ENCODE measurements at regions of chr12 and their contacts with region 1.

Region 1: DNA sequence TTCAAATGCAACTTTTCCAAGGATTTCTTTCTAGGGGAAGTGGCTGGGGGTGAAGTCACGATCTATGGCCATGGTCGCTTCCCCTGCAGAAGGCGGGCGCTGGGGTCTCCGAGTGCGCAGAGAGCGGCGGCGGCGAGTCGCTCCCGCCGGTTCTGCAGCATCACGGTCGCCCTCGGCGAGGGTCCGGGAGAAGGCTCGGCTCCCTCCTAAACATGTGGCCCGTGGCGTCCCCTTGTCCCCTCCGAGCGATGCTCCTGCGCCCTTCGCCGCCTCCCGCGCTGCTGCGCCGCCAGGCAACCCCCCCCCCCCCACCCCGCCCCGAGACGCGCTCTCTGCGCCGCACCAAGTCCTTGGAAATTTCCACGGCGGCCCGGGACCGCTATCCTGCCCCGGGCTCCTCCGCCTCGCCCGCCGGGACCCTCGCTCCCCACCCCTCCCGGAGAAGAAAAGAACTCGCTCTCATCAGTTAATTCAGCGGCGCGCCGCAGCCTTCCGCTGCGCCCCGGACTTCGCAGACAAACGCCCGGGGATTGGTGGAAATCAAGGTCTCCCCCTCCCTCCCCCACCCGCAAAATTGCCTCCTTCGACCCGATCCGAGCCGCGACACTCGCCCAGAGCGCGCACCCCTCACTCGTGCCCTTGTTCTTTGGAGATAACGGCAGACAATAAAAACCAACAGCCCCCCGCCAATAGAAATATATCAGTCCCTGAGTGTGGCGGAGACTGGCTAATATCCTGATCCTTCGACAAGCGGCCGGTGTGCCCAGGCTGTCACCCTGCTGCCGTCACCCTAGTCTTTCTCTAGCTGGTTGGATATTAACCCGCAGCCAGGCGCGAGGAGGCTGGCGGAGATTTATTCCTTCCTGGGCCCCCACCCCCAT is at the start of gene ST8SIA1:
- DNase-seq: no peak
- H3K4me3 ChIP-seq: peak within 1 kb of the TSS; percentile 30 to 47 (median 39)
- H3K27ac ChIP-seq: no peak within 1 kb of the TSS
- H3K4me1 ChIP-seq: no peaks in the 10 kb centered on the region
- H3K27me3 ChIP-seq: peaks cover 31 to 65% of the 10 kb centered on the region in 2 experiments
- CTCF ChIP-seq: no peak
- POLR2A ChIP-seq: no peak
- total RNA-seq, gene ST8SIA1: not detected in 2 replicates

Region 2: GRCh38 chr12:22083167-22083566 is 251.5 kb before region 1 on chr12:
- CTCF ChIA-PET with region 1: interaction called, 22 read pairs
- POLR2A ChIA-PET with region 1: no interaction called
- dilution Hi-C with region 1: no loop called
- intact Hi-C with region 1: loop called (anchors 1 kb)
- DNase-seq: peak; percentile 56
- H3K4me3 ChIP-seq: no peak overlapping the region
- H3K27ac ChIP-seq: no peak overlapping the region
- H3K4me1 ChIP-seq: no peaks in the 10 kb centered on the region
- H3K27me3 ChIP-seq: peaks cover 0 to 2% of the 10 kb centered on the region in 2 experiments
- CTCF ChIP-seq: peak in 1 of 2 donors; percentile 12
- POLR2A ChIP-seq: no peak

Region 3: GRCh38 chr12:22121227-22121626 is 213.4 kb before region 1 on chr12:
- CTCF ChIA-PET with region 1: interaction called, 16 read pairs
- POLR2A ChIA-PET with region 1: no interaction called
- dilution Hi-C with region 1: no loop called
- intact Hi-C with region 1: loop called (anchors 5 kb)
- DNase-seq: no peak
- H3K4me3 ChIP-seq: no peak overlapping the region
- H3K27ac ChIP-seq: no peak overlapping the region
- H3K4me1 ChIP-seq: no peaks in the 10 kb centered on the region
- H3K27me3 ChIP-seq: peaks cover 0 to 2% of the 10 kb centered on the region in 2 experiments
- CTCF ChIP-seq: peak; percentile 4 to 32
- POLR2A ChIP-seq: no peak

Region 4: DNA sequence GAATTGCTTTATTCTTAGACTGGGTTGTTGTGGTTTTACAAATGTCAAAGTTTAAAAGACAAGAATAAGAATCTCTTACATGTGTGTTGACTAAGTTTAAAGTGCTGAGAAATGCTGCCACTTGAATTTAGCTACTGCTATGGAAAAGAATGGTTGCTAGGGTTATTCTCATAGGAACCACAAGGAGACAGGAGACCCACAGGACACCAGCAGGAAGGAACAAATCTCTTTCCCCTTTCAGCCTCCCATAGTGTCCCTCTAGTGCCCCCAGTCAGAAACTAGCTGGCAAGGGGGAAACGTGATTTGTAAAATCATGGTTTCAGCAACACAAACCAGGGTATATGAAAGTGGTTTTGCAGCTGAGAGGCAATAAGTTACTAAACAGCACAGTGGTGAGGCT is 102.8 kb before region 1 on chr12:
- CTCF ChIA-PET with region 1: interaction called, 20 read pairs
- POLR2A ChIA-PET with region 1: no interaction called
- dilution Hi-C with region 1: no loop called
- intact Hi-C with region 1: no loop called
- DNase-seq: peak; percentile 4
- H3K4me3 ChIP-seq: no peak overlapping the region
- H3K27ac ChIP-seq: no peak overlapping the region
- H3K4me1 ChIP-seq: no peaks in the 10 kb centered on the region
- H3K27me3 ChIP-seq: peaks cover 3% of the 10 kb centered on the region in 2 experiments
- CTCF ChIP-seq: peak in 1 of 2 donors; percentile 3
- POLR2A ChIP-seq: no peak

Region 5: GRCh38 chr12:22255097-22255496 is 79.6 kb before region 1 on chr12:
- CTCF ChIA-PET with region 1: no interaction called
- POLR2A ChIA-PET with region 1: no interaction called
- dilution Hi-C with region 1: no loop called
- intact Hi-C with region 1: no loop called
- DNase-seq: no peak
- H3K4me3 ChIP-seq: no peak overlapping the region
- H3K27ac ChIP-seq: no peak overlapping the region
- H3K4me1 ChIP-seq: no peaks in the 10 kb centered on the region
- H3K27me3 ChIP-seq: peaks cover 12 to 20% of the 10 kb centered on the region in 2 experiments
- CTCF ChIP-seq: no peak
- POLR2A ChIP-seq: no peak

Region 6: DNA sequence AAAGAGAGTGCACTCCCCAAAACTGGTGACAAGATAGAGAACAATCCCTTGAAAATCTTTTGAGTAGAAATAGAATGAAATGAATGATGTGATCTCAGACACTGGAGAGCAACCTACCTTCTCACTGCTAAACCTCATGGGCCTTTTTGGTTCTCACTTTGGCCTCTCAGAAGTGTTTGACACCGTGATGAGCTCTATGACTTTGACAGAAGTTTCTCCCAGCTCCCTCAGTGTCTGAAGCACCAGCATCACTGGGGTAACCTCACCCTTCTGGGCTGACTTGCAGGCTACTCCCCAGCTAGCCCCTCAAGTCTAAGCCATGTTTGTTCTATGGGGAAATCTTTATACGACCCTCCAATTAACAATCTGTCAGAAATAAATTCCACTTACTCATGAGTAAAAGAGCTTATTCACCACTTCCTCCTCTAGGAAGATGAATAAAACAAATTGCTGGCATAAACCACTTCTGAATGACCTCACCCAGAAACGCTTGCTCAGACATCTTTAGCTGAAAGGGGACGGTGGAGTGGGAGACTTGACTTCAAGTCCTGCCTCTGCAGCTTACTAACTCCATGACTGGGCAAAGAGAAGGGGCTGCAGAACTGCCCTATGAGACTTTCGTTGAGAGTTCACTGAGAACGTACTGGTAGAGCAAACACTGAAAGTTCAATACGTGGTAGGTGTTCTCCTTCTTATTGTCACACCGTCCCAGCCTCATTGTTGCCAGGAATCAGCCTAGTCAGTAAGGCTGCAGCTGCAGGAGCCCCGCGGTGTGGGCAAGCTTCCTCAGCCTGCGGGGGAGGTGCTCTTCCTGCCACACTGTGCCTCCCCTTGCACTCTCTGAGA is 46.7 kb before region 1 on chr12:
- CTCF ChIA-PET with region 1: interaction called, 10 read pairs
- POLR2A ChIA-PET with region 1: no interaction called
- dilution Hi-C with region 1: no loop called
- intact Hi-C with region 1: no loop called
- DNase-seq: peak; percentile 60
- H3K4me3 ChIP-seq: no peak overlapping the region
- H3K27ac ChIP-seq: no peak overlapping the region
- H3K4me1 ChIP-seq: peaks cover 21% of the 10 kb centered on the region
- H3K27me3 ChIP-seq: no peaks in the 10 kb centered on the region
- CTCF ChIP-seq: no peak
- POLR2A ChIP-seq: no peak

Region 7: GRCh38 chr12:22631863-22632463 is 297.3 kb after region 1 on chr12:
- CTCF ChIA-PET with region 1: no interaction called
- POLR2A ChIA-PET with region 1: no interaction called
- dilution Hi-C with region 1: no loop called
- intact Hi-C with region 1: no loop called
- DNase-seq: peak; percentile 26
- H3K4me3 ChIP-seq: no peak overlapping the region
- H3K27ac ChIP-seq: no peak overlapping the region
- H3K4me1 ChIP-seq: peaks cover 18% of the 10 kb centered on the region
- H3K27me3 ChIP-seq: no peaks in the 10 kb centered on the region
- CTCF ChIP-seq: peak in 1 of 2 donors; percentile 13
- POLR2A ChIP-seq: no peak

Measured in endothelial cell of umbilical vein (primary cell).